Calu3 (cell line): ENCODE measurements at regions of chr7 and their contacts with region 1.

Region 1: GRCh38 chr7:112383671-112384417 is 66.4 kb upstream of the IFRD1 start:
- DNase-seq: no peak
- H3K4me3 Mint-ChIP-seq: no peak overlapping the region
- H3K27ac Mint-ChIP-seq: no peak overlapping the region
- H3K4me1 Mint-ChIP-seq: peaks cover 10% of the 10 kb centered on the region
- H3K27me3 Mint-ChIP-seq: no peaks in the 10 kb centered on the region
- CTCF ChIP-seq: no peak

Region 2: GRCh38 chr7:112080441-112080840 is 303.4 kb before region 1 on chr7:
- CTCF ChIA-PET with region 1: no interaction called
- intact Hi-C with region 1: loop called (anchors 10 kb)
- DNase-seq: no peak
- H3K4me3 Mint-ChIP-seq: no peak overlapping the region
- H3K27ac Mint-ChIP-seq: no peak overlapping the region
- H3K4me1 Mint-ChIP-seq: no peaks in the 10 kb centered on the region
- H3K27me3 Mint-ChIP-seq: no peaks in the 10 kb centered on the region
- CTCF ChIP-seq: no peak